CD8-positive, alpha-beta T cell (primary cell): ENCODE measurements at regions of chr5 and their contacts with region 1.

Region 1: GRCh38 chr5:93800988-93801811 is 59.8 kb upstream of the POU5F2 start:
- DNase-seq: peak in 4 of 9 experiments; percentile 15 to 65 (median 42)
- ATAC-seq: no peak
- H3K4me3 ChIP-seq: no peak overlapping the region
- H3K4me3 Mint-ChIP-seq: no peak overlapping the region
- H3K27ac ChIP-seq: no peak overlapping the region
- H3K27ac Mint-ChIP-seq: no peak overlapping the region
- H3K4me1 ChIP-seq: no peaks in the 10 kb centered on the region
- H3K4me1 Mint-ChIP-seq: no peaks in the 10 kb centered on the region
- H3K27me3 ChIP-seq: no peaks in the 10 kb centered on the region
- H3K27me3 Mint-ChIP-seq: no peaks in the 10 kb centered on the region
- CTCF ChIP-seq: peak; percentile 75

Region 2: DNA sequence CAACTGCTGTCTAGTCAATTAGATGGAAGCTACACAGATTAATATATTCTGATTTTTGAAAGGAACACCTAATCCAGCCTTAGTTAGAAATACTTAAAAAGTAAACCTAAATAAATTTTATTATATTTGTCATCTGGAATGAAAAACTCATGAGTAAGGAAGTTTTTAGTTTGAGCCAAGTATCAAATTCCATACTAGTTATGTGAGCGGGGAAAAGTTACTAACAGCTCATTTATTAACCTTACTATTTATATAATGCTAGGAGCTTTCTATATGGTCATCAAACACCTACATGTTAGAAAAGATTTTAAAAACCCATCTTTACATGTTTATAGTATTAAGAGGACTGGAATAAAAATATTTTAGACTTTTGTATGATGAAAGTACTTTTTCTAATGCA is 18.2 kb before region 1 on chr5:
- CTCF ChIA-PET with region 1: interaction called, 12 read pairs
- POLR2A ChIA-PET with region 1: no interaction called
- intact Hi-C with region 1: no loop called
- DNase-seq: no peak
- ATAC-seq: no peak
- H3K4me3 ChIP-seq: no peak overlapping the region
- H3K4me3 Mint-ChIP-seq: no peak overlapping the region
- H3K27ac ChIP-seq: no peak overlapping the region
- H3K27ac Mint-ChIP-seq: no peak overlapping the region
- H3K4me1 ChIP-seq: no peaks in the 10 kb centered on the region
- H3K4me1 Mint-ChIP-seq: no peaks in the 10 kb centered on the region
- H3K27me3 ChIP-seq: no peaks in the 10 kb centered on the region
- H3K27me3 Mint-ChIP-seq: no peaks in the 10 kb centered on the region
- CTCF ChIP-seq: no peak